Activated CD4-positive, alpha-beta T cell treated with anti-CD3 and anti-CD28 coated beads for 36 hours (primary cell): ENCODE measurements at regions of chr14 and their contacts with region 1.

Region 1: GRCh38 chr14:95157327-95158189 is at the start of gene DICER1:
- DNase-seq: peak; percentile 97
- ATAC-seq: peak; percentile 83
- H3K4me3 Mint-ChIP-seq: peak within 1 kb of the TSS; percentile 95
- H3K27ac Mint-ChIP-seq: peak within 1 kb of the TSS; percentile 99
- H3K4me1 Mint-ChIP-seq: peaks cover 36% of the 10 kb centered on the region
- H3K27me3 Mint-ChIP-seq: no peaks in the 10 kb centered on the region
- total RNA-seq, gene DICER1: 41.6 to 61.1 TPM

Region 2: DNA sequence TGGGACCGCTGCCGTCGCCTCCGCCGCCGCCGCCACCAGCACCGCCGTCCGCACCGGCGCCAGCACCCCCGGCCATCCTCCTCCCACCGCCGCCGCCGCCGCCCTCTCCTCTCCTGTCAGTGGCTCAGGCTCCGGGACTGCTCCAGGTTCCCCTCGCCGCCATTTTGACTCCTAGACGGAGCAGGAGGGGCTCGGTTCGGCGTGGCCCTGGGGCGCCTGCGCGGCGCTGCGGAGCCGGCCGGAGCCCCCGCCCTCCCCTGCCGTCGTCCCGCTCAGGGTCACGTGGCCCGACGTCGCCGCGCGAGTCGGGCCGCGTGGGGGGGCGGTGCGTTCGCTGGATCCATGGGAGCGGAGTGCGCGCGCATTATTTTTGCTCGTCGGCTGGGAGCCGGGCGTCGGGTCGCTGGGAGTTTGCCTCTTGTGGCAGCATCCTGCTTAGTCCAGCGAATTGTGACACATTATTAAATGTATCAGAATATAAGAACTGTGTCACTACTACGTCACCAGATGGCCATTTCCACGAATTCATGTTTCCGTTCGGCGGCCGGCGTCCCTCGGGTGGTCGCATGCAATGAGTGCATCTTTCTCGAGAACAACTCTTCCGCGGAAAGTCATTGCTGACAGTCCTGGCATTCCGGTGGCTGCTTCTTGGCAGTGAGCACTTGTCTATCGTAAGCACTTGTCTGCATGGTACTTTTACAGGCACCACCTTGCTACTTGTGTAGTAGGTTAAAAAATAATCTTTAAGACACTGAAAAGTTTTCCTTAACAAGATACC is 1824.5 kb before region 1 on chr14 and contains the start of gene BTBD7:
- CTCF ChIA-PET with region 1: no interaction called
- POLR2A ChIA-PET with region 1: no interaction called
- intact Hi-C with region 1: loop called in 1 of 2 experiments (anchors 10 kb)
- DNase-seq: peak; percentile 97
- ATAC-seq: peak; percentile 94
- H3K4me3 Mint-ChIP-seq: peak within 1 kb of the TSS; percentile 90
- H3K27ac Mint-ChIP-seq: peak within 1 kb of the TSS; percentile 88
- H3K4me1 Mint-ChIP-seq: peaks cover 46% of the 10 kb centered on the region
- H3K27me3 Mint-ChIP-seq: no peaks in the 10 kb centered on the region
- total RNA-seq, gene BTBD7: 6.5 to 9.5 TPM

Region 3: GRCh38 chr14:94392510-94392935 is 765.0 kb before region 1 on chr14:
- CTCF ChIA-PET with region 1: no interaction called
- POLR2A ChIA-PET with region 1: no interaction called
- intact Hi-C with region 1: loop called in 1 of 2 experiments (anchors 5 kb)
- DNase-seq: peak; percentile 84
- ATAC-seq: peak; percentile 67
- H3K4me3 Mint-ChIP-seq: no peak overlapping the region
- H3K27ac Mint-ChIP-seq: peak overlapping the region; percentile 97
- H3K4me1 Mint-ChIP-seq: peaks cover 70% of the 10 kb centered on the region
- H3K27me3 Mint-ChIP-seq: peaks cover 5% of the 10 kb centered on the region

Region 4: GRCh38 chr14:95319312-95320021 is 161.9 kb after region 1 on chr14 and contains the start of gene CLMN:
- CTCF ChIA-PET with region 1: interaction called, 3 read pairs
- POLR2A ChIA-PET with region 1: no interaction called
- intact Hi-C with region 1: loop called in 1 of 2 experiments (anchors 5 kb)
- DNase-seq: peak; percentile 48
- ATAC-seq: peak; percentile 65
- H3K4me3 Mint-ChIP-seq: peak within 1 kb of the TSS; percentile 64
- H3K27ac Mint-ChIP-seq: peak within 1 kb of the TSS; percentile 29
- H3K4me1 Mint-ChIP-seq: peaks cover 14% of the 10 kb centered on the region
- H3K27me3 Mint-ChIP-seq: peaks cover 42% of the 10 kb centered on the region
- total RNA-seq, gene CLMN: 0.75 to 1.5 TPM

Region 5: DNA sequence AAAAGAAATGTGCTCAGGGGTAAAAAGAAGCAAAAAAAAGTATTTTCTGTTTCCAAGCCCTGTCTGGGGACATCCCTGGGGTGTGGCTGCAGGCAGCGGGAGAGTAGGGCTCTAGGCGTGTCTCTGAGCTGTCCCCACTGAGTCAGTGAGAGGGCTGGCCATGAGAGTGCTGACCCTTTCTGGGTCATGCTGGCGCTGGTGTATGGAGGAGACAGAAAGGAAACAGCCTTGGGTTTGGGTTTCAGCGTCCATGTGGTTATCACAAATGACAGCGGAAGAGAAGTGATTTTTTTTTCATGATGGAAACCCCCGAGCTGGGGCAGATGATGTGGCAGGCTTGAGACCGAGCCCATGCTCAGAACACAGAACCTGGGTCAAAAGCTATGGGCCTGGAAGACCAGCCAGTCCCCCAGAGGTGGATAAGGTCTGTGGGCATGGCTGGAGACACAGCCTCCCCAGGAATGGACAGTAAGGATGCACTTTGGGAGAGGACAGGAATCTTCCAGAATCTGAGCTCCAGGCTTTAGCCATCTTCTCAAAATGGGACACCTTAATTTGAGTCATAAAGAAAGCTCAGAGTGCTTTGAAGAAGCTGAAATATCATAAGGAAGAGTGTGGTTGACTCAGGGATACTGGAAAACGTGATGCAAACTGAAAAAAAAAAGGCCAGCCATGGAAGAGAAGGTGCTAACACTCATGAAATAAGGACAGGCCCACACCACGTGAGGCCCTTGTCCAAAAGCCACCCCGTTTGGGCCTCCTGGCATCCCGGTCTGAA is 322.7 kb after region 1 on chr14:
- CTCF ChIA-PET with region 1: no interaction called
- POLR2A ChIA-PET with region 1: no interaction called
- intact Hi-C with region 1: loop called in 1 of 2 experiments (anchors 1 kb)
- DNase-seq: peak; percentile 66
- ATAC-seq: peak; percentile 87
- H3K4me3 Mint-ChIP-seq: peak overlapping the region; percentile 12
- H3K27ac Mint-ChIP-seq: peak overlapping the region; percentile 85
- H3K4me1 Mint-ChIP-seq: peaks cover 43% of the 10 kb centered on the region
- H3K27me3 Mint-ChIP-seq: no peaks in the 10 kb centered on the region

Region 6: GRCh38 chr14:95534299-95535225 is 377.0 kb after region 1 on chr14 and contains the start of gene GLRX5:
- CTCF ChIA-PET with region 1: no interaction called
- POLR2A ChIA-PET with region 1: interaction called, 3 read pairs
- intact Hi-C with region 1: loop called (anchors 1 to 5 kb)
- DNase-seq: peak; percentile 98
- ATAC-seq: peak; percentile 94
- H3K4me3 Mint-ChIP-seq: peak within 1 kb of the TSS; percentile 93
- H3K27ac Mint-ChIP-seq: peak within 1 kb of the TSS; percentile 94
- H3K4me1 Mint-ChIP-seq: peaks cover 60% of the 10 kb centered on the region
- H3K27me3 Mint-ChIP-seq: no peaks in the 10 kb centered on the region
- total RNA-seq, gene GLRX5: 37.9 to 44.1 TPM

Region 7: GRCh38 chr14:96501742-96502617 is 1344.4 kb after region 1 on chr14 and contains the start of gene PAPOLA:
- CTCF ChIA-PET with region 1: no interaction called
- POLR2A ChIA-PET with region 1: no interaction called
- intact Hi-C with region 1: loop called in 1 of 2 experiments (anchors 10 kb)
- DNase-seq: peak; percentile 96
- ATAC-seq: peak; percentile 95
- H3K4me3 Mint-ChIP-seq: peak within 1 kb of the TSS; percentile 99
- H3K27ac Mint-ChIP-seq: peak within 1 kb of the TSS; percentile 98
- H3K4me1 Mint-ChIP-seq: peaks cover 31% of the 10 kb centered on the region
- H3K27me3 Mint-ChIP-seq: peaks cover 6% of the 10 kb centered on the region
- total RNA-seq, gene PAPOLA: 190 to 205 TPM